Right cardiac atrium (tissue), 5 donors: ENCODE measurements at regions of chr14 and their contacts with region 1.

Region 1: DNA sequence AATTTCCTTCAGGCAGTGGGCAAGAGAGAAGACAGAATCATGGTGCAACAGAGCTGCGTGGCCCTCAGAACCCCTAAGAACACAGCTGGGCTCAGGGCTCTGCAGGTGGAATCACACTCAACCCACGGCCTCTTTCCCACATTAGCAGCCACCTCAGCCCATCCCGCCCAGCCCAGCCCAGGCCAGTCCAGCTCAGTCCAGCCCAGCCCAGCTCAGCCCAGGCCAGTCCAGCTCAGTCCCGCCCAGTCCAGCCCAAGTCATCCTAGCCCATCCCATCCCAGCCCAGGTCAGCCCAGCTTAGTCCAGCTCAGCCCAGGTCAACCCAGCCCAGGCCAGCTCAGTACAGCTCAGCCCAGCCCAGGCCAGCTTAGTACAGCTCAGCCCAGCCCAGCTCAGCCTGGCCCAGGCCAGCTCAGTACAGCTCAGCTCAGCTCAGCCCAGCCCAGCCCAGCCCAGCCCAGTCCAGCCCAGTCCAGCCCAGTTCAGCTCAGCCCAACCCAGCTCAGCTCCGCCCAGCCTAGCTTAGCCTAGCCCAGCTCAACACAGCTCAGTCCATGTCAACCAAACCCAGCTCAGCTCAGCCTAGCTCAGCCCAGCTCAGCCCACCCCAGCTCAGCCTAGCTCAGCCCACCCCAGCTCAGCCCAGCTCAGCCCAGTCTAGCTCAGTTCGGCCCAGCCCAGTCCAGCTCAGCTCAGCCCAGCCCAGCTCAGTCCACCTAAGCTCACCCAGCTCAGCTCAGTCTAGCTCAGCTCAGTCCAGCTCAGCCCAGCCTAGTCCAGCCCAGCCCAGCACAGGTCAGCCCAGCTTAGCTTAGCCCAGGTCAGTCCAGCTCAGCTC is 183.1 kb downstream of the TMEM121 start:
- DNase-seq: peak in 1 of 3 donors; percentile 24
- ATAC-seq: no peak
- H3K4me3 ChIP-seq: no peak overlapping the region
- H3K27ac ChIP-seq: no peak overlapping the region
- H3K4me1 ChIP-seq: no peaks in the 10 kb centered on the region
- H3K27me3 ChIP-seq: no peaks in the 10 kb centered on the region

Region 2: GRCh38 chr14:105589161-105590062 is 120.1 kb before region 1 on chr14:
- intact Hi-C with region 1: loop called in 2 of 4 experiments (anchors 5 kb)
- DNase-seq: no peak
- ATAC-seq: peak in 1 of 2 donors; percentile 13
- H3K4me3 ChIP-seq: no peak overlapping the region
- H3K27ac ChIP-seq: no peak overlapping the region
- H3K4me1 ChIP-seq: no peaks in the 10 kb centered on the region
- H3K27me3 ChIP-seq: no peaks in the 10 kb centered on the region